Natural killer cell (primary cell): ENCODE measurements at regions of chr3 and their contacts with region 1.

Region 1: DNA sequence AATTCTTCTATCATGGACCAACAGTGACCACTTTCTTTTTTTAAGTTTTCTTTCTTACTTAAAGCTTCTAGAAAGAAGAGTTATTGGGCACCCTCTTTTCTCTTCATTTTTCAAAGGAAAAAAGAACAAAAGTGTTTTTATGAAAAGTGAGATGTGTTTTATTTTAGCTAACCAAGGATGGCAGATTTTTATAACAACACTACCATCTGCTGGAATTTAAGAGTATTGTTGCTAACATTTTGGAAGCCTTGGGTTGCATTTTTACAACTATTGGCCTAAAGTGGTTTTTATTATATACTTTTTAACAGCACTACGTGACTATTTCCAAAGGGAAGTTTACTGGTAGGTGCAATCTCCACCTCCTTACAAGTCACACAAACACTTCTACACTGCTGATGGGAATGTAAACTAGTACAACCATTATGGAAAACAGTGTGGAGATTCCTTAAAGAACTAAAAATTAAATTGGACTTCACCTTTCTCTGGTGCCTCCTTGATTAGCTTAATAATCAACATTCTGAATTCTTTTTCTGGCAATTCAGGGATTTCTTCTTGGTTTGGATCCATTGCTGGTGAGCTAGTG is 237.7 kb upstream of the AGTR1 start:
- DNase-seq: no peak
- ATAC-seq: no peak
- H3K4me3 ChIP-seq: no peak overlapping the region
- H3K4me3 Mint-ChIP-seq: no peak overlapping the region
- H3K27ac ChIP-seq: no peak overlapping the region
- H3K27ac Mint-ChIP-seq: no peak overlapping the region
- H3K4me1 ChIP-seq: no peaks in the 10 kb centered on the region
- H3K4me1 Mint-ChIP-seq: no peaks in the 10 kb centered on the region
- H3K27me3 ChIP-seq: no peaks in the 10 kb centered on the region
- H3K27me3 Mint-ChIP-seq: no peaks in the 10 kb centered on the region
- CTCF ChIP-seq: no peak

Region 2: DNA sequence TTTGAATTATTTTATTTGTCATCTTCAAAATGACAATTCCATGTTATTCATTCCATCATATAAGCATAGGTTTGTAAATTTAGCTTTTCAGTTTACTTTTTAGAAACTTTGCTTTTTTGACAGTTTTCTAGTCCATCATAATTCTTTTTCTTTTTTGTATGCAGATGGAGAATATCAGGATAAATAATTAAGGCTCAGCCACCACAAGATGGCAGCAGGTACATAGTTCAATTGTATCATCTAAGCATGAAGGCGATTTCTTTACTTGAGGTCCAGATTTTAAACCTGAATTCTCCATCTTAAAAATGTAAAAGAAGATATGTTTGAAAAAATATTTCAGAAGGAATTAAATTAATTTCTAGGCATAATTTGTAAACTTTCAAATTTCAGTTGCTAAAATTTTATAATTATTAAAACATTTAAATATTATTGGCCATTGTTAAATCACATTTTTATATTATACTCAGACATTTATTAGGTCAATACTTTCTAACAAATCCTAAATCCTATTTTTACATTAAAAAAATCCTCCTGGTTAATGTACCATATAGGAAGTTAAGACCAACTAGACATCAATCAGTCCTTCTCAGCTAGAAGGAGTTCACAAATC is 1870.0 kb before region 1 on chr3:
- intact Hi-C with region 1: loop called (anchors 5 kb)
- DNase-seq: peak in 1 of 2 donors; percentile 26
- ATAC-seq: no peak
- H3K4me3 ChIP-seq: no peak overlapping the region
- H3K4me3 Mint-ChIP-seq: no peak overlapping the region
- H3K27ac ChIP-seq: no peak overlapping the region
- H3K27ac Mint-ChIP-seq: no peak overlapping the region
- H3K4me1 ChIP-seq: no peaks in the 10 kb centered on the region
- H3K4me1 Mint-ChIP-seq: no peaks in the 10 kb centered on the region
- H3K27me3 ChIP-seq: no peaks in the 10 kb centered on the region
- H3K27me3 Mint-ChIP-seq: peaks cover 0 to 3% of the 10 kb centered on the region in 2 donors
- CTCF ChIP-seq: no peak

Region 3: DNA sequence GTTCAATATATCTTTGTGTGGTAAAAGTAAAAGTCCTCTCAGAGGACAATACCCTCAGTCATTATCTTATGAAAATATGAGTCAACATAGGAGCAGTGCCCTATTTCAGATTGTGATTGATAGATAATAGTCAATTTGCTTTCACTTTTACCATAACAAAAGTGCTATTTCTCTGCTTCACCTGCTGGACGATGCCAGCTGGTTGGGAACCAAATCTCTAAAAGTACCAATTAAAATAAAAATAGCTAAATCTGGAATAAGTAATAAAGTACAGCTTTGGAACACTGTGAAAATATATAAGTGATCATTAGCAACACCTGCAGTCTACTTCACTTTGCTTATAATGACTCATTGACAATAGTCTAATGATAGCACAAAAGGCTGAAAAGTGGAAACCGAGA is 152.6 kb before region 1 on chr3:
- intact Hi-C with region 1: no loop called
- DNase-seq: no peak
- ATAC-seq: no peak
- H3K4me3 ChIP-seq: no peak overlapping the region
- H3K4me3 Mint-ChIP-seq: no peak overlapping the region
- H3K27ac ChIP-seq: no peak overlapping the region
- H3K27ac Mint-ChIP-seq: no peak overlapping the region
- H3K4me1 ChIP-seq: no peaks in the 10 kb centered on the region
- H3K4me1 Mint-ChIP-seq: no peaks in the 10 kb centered on the region
- H3K27me3 ChIP-seq: no peaks in the 10 kb centered on the region
- H3K27me3 Mint-ChIP-seq: no peaks in the 10 kb centered on the region
- CTCF ChIP-seq: no peak

Region 4: DNA sequence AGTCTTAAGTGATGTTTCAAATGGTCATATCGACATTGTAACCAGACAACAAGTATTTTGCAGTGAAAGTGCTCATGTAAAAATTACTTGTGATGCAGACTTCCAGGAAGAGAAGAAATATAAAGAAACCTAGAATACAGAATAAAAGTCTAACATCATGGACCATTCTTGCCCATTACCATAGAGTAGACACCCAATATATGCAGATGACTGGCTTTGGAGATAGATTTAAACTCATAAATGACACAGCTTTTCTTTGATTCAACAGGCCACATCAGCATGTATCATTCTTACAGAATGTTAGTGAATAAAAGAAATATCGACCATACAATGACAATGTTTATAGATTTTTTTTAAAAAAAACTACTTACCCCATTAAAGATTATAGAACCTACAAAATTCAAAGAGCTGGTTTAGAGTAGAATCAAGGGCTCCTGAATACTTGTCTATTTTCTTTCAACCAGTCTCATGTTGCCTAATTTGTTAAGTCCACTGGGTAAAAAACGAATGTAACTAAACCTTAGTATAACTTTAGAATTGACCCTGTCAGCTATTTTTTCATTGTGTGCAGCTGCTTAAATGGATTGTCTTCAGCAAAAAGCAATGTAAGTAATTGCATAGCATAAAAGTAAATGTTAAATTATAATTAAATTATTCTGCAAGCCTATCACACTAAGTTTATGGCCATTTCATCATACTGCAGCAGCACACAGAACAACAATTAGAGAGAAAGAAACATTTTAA is 31.0 kb before region 1 on chr3:
- intact Hi-C with region 1: no loop called
- DNase-seq: no peak
- ATAC-seq: no peak
- H3K4me3 ChIP-seq: no peak overlapping the region
- H3K4me3 Mint-ChIP-seq: no peak overlapping the region
- H3K27ac ChIP-seq: no peak overlapping the region
- H3K27ac Mint-ChIP-seq: no peak overlapping the region
- H3K4me1 ChIP-seq: no peaks in the 10 kb centered on the region
- H3K4me1 Mint-ChIP-seq: no peaks in the 10 kb centered on the region
- H3K27me3 ChIP-seq: no peaks in the 10 kb centered on the region
- H3K27me3 Mint-ChIP-seq: no peaks in the 10 kb centered on the region
- CTCF ChIP-seq: no peak